ENCODE measurements at regions of chr4 and their contacts with region 1.

Region 1: GRCh38 chr4:64251781-64252180 is 157.5 kb downstream of the TECRL start:
- DNase-seq: no peak
- ATAC-seq: no peak
- H3K4me3 ChIP-seq: no peak overlapping the region
- H3K27ac ChIP-seq: no peak overlapping the region
- H3K4me1 ChIP-seq: no peaks in the 10 kb centered on the region
- H3K27me3 ChIP-seq: no peaks in the 10 kb centered on the region
- CTCF ChIP-seq: no peak
- EP300 ChIP-seq: no peak
- POLR2A ChIP-seq: no peak
- RAD21 ChIP-seq: no peak

Region 2: DNA sequence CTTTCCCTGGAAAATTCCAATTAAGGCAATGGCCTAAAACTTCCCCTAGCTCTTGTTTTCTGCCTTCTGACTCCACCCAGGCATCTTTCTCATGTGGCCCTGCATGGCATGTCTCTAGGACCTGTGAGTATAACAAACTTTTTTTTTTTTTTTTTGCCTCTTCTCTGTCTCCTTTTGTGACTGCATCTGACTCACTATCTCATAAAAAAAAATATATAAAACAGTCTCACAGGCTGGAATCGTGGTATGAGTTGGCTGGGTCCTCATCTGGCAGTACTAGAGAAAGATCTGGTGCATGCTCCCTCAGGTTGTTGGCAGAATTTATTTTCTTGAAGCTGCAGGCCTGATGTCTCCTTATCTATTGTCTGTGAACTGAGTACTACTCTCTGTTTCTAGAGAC is 156.4 kb before region 1 on chr4:
- CTCF ChIA-PET with region 1: no interaction called
- POLR2A ChIA-PET with region 1: no interaction called
- in situ Hi-C with region 1: no loop called
- intact Hi-C with region 1: no loop called
- DNase-seq: no peak
- ATAC-seq: no peak
- H3K4me3 ChIP-seq: no peak overlapping the region
- H3K27ac ChIP-seq: no peak overlapping the region
- H3K4me1 ChIP-seq: no peaks in the 10 kb centered on the region
- H3K27me3 ChIP-seq: no peaks in the 10 kb centered on the region
- CTCF ChIP-seq: no peak
- EP300 ChIP-seq: no peak
- POLR2A ChIP-seq: no peak
- RAD21 ChIP-seq: no peak

Region 3: GRCh38 chr4:64216741-64217140 is 35.0 kb before region 1 on chr4:
- CTCF ChIA-PET with region 1: no interaction called
- POLR2A ChIA-PET with region 1: no interaction called
- in situ Hi-C with region 1: no loop called
- intact Hi-C with region 1: loop called (anchors 5 kb)
- DNase-seq: no peak
- ATAC-seq: no peak
- H3K4me3 ChIP-seq: no peak overlapping the region
- H3K27ac ChIP-seq: no peak overlapping the region
- H3K4me1 ChIP-seq: no peaks in the 10 kb centered on the region
- H3K27me3 ChIP-seq: no peaks in the 10 kb centered on the region
- CTCF ChIP-seq: no peak
- EP300 ChIP-seq: no peak
- POLR2A ChIP-seq: no peak
- RAD21 ChIP-seq: no peak

Region 4: GRCh38 chr4:64271601-64272081 is 19.9 kb after region 1 on chr4:
- CTCF ChIA-PET with region 1: no interaction called
- POLR2A ChIA-PET with region 1: no interaction called
- in situ Hi-C with region 1: no loop called
- intact Hi-C with region 1: no loop called
- DNase-seq: no peak
- ATAC-seq: no peak
- H3K4me3 ChIP-seq: no peak overlapping the region
- H3K27ac ChIP-seq: no peak overlapping the region
- H3K4me1 ChIP-seq: no peaks in the 10 kb centered on the region
- H3K27me3 ChIP-seq: no peaks in the 10 kb centered on the region
- CTCF ChIP-seq: no peak
- EP300 ChIP-seq: no peak
- POLR2A ChIP-seq: no peak
- RAD21 ChIP-seq: no peak

Region 5: DNA sequence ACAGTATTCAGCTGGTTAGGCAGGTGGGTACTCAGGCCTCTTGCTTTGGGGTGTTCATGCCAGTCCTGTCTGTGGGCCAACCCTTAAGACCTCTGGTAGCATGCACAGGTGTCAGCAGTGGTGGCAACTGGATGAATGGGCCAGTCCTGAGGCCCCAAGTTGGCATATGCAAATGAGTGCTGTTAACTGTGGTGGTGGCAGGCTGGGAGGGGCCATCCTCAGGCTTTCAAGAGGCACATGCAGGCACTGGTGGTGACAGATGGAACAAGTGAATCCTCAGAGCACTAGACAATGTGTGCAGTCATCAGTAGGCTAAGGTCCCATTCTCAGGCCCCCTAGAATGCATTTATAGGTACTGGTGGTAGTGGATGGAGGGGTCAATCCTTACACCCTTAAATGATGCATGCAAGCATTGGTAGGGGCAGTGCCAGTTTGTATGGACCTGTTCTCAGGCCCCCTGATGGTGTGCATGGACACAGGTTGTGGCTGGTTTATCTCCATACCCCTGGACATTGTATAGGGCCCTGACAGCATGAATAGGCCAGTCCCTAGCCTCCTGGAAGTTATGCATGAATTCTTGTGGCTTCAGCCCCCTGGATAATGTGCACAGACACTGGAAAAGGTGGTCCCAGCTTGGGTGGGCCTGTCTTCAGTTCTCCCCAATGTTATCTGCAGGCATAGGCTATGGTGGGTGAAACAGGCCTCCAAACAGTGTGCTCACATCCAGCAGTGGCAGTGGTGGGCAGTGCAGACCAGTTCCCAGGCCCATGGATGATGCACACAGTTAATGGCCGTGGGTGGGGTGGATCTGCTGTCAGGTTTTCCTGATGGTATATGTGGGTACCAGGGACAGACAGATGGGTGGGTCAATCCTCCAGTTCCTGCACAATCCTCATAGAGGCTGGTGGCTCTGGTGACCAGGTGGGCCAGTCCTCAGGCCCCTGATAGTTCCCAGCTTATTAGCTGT is 132.7 kb after region 1 on chr4:
- CTCF ChIA-PET with region 1: no interaction called
- POLR2A ChIA-PET with region 1: no interaction called
- in situ Hi-C with region 1: no loop called
- intact Hi-C with region 1: no loop called
- DNase-seq: no peak
- ATAC-seq: no peak
- H3K4me3 ChIP-seq: no peak overlapping the region
- H3K27ac ChIP-seq: no peak overlapping the region
- H3K4me1 ChIP-seq: no peaks in the 10 kb centered on the region
- H3K27me3 ChIP-seq: no peaks in the 10 kb centered on the region
- CTCF ChIP-seq: no peak
- EP300 ChIP-seq: no peak
- POLR2A ChIP-seq: no peak
- RAD21 ChIP-seq: no peak

Region 6: DNA sequence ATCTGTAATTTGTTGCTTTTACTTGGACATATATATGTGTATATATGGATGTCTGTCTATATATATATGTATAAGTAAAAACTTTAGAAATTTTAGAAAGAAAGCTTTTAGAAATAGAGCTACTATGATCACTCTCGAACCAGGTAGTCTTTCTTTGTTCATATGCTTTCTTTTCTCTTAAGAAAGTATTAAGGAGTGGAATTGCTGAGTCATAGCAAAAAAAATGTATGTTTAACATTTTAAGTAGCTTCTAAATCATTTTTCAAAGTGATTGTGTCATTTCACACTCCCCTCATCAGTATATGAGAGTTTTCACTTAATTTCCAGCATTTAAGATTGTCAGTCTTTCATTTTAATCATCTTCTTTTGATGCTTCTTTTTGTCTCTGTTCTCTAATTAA is 605.4 kb after region 1 on chr4:
- CTCF ChIA-PET with region 1: no interaction called
- POLR2A ChIA-PET with region 1: no interaction called
- in situ Hi-C with region 1: no loop called
- intact Hi-C with region 1: no loop called
- DNase-seq: no peak
- ATAC-seq: no peak
- H3K4me3 ChIP-seq: no peak overlapping the region
- H3K27ac ChIP-seq: no peak overlapping the region
- H3K4me1 ChIP-seq: no peaks in the 10 kb centered on the region
- H3K27me3 ChIP-seq: no peaks in the 10 kb centered on the region
- CTCF ChIP-seq: no peak
- EP300 ChIP-seq: no peak
- POLR2A ChIP-seq: no peak
- RAD21 ChIP-seq: no peak

Measured in K562 (cell line).